CD4-positive, alpha-beta memory T cell (primary cell): ENCODE measurements at regions of chr22 and their contacts with region 1.

Region 1: GRCh38 chr22:25447686-25448434 is 116.6 kb upstream of the GRK3 start:
- DNase-seq: peak; percentile 84 to 88 (median 87)
- H3K4me3 ChIP-seq: peak overlapping the region; percentile 71 to 74
- H3K4me3 Mint-ChIP-seq: peak overlapping the region; percentile 93 to 99 (median 96)
- H3K27ac ChIP-seq: peak overlapping the region; percentile 67
- H3K27ac Mint-ChIP-seq: peak overlapping the region; percentile 77 to 98 (median 95)
- H3K4me1 ChIP-seq: peaks cover 39% of the 10 kb centered on the region
- H3K4me1 Mint-ChIP-seq: peaks cover 34 to 53% (median 42%) of the 10 kb centered on the region in 4 donors
- H3K27me3 ChIP-seq: no peaks in the 10 kb centered on the region
- H3K27me3 Mint-ChIP-seq: no peaks in the 10 kb centered on the region

Region 2: DNA sequence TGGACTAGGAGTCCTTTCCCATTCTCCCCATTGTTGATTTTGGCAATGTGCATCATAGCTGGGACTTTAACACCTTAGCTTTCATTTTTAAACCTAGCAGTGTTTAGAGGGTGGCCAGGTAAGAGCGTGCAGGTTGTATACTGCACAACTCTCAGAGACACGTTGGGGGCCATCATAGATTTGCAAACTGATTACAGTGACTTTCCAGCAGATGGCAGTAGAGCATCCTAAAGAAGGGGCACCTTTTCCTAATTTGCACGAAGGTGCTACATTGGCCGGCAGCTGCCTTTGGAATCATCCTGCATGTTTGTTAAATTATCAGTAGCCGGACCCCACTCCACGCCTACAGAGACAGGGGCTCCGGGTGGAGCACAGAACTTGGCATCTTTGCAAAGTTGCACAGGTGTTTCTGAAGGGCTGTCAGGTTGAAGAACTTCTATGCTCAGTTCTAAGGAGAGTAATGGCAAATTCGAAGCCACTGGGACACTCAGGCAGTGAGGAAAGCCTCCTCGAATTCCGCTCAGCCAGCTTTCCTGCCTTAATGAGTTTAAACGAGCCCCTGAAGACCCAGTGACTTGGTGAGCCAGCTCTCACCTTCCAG is 509.0 kb before region 1 on chr22:
- CTCF ChIA-PET with region 1: no interaction called
- POLR2A ChIA-PET with region 1: no interaction called
- intact Hi-C with region 1: no loop called
- DNase-seq: peak in 4 of 5 donors; percentile 38 to 47 (median 42)
- H3K4me3 ChIP-seq: no peak overlapping the region
- H3K4me3 Mint-ChIP-seq: no peak overlapping the region
- H3K27ac ChIP-seq: no peak overlapping the region
- H3K27ac Mint-ChIP-seq: no peak overlapping the region
- H3K4me1 ChIP-seq: no peaks in the 10 kb centered on the region
- H3K4me1 Mint-ChIP-seq: peaks cover 0 to 2% (median 0%) of the 10 kb centered on the region in 4 donors
- H3K27me3 ChIP-seq: no peaks in the 10 kb centered on the region
- H3K27me3 Mint-ChIP-seq: peaks cover 0 to 5% of the 10 kb centered on the region in 2 donors

Region 3: GRCh38 chr22:25067851-25068421 is 379.9 kb before region 1 on chr22:
- CTCF ChIA-PET with region 1: no interaction called
- POLR2A ChIA-PET with region 1: no interaction called
- intact Hi-C with region 1: loop called (anchors 10 kb)
- DNase-seq: peak; percentile 91 to 95 (median 93)
- H3K4me3 ChIP-seq: no peak overlapping the region
- H3K4me3 Mint-ChIP-seq: peak overlapping the region; percentile 84 to 95 (median 90)
- H3K27ac ChIP-seq: peak overlapping the region; percentile 77
- H3K27ac Mint-ChIP-seq: peak overlapping the region; percentile 95 to 99 (median 97)
- H3K4me1 ChIP-seq: peaks cover 83% of the 10 kb centered on the region
- H3K4me1 Mint-ChIP-seq: peaks cover 57 to 91% (median 77%) of the 10 kb centered on the region in 4 donors
- H3K27me3 ChIP-seq: no peaks in the 10 kb centered on the region
- H3K27me3 Mint-ChIP-seq: no peaks in the 10 kb centered on the region

Region 4: DNA sequence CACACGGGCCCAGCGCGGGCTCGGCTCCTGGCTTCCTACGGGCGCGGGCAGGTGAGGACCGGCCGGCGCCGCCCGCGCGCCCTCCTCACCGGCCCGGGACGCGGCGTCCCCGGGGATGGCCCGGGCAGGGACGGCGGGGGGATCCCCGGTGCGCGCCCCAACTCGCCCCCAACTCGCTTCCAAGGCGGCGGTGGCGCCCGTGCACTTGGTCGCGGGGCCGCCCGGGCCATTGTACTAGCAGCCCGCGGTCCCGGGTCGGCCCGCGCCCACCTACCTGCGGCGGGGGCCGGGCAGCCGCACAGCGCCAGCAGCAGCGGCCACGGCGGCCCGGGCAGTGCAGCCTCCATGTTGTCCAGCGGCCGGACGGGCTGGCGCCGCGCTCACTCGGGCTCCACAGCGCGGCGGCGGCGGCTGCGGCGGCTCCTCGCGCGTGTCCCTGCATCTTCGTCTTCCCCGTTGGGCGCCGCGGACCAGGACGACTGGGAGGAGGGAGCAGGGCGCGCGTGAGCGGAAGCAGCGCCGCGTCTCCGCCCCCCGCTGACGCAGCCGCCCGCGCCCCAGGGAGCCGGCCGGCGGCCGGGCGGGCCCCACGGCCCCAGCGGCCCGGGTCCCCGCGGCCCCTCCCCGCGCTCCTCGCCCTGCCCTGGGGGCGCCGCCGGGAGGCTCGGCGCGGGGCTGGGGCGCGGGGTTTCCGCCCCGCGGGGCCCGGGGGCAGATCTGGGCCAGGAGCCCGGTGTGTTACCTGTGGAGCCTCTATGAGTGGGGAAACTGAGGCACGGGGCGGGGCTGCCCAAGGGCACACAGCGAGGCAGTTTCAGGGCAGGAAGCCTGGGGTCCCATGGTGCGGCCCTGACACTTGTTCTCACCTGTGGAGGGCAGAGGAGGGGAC is 42.7 kb before region 1 on chr22:
- CTCF ChIA-PET with region 1: no interaction called
- POLR2A ChIA-PET with region 1: no interaction called
- intact Hi-C with region 1: loop called (anchors 1 kb)
- DNase-seq: peak; percentile 54 to 64 (median 64)
- H3K4me3 ChIP-seq: peak overlapping the region in 1 of 2 donors; percentile 41
- H3K4me3 Mint-ChIP-seq: peak overlapping the region; percentile 76 to 87 (median 79)
- H3K27ac ChIP-seq: peak overlapping the region; percentile 55
- H3K27ac Mint-ChIP-seq: peak overlapping the region in 5 of 7 donors; percentile 53 to 83 (median 73)
- H3K4me1 ChIP-seq: peaks cover 31% of the 10 kb centered on the region
- H3K4me1 Mint-ChIP-seq: peaks cover 16 to 46% (median 29%) of the 10 kb centered on the region in 4 donors
- H3K27me3 ChIP-seq: no peaks in the 10 kb centered on the region
- H3K27me3 Mint-ChIP-seq: no peaks in the 10 kb centered on the region

Region 5: GRCh38 chr22:25465949-25466348 is 18.1 kb after region 1 on chr22:
- CTCF ChIA-PET with region 1: interaction called, 15 read pairs
- POLR2A ChIA-PET with region 1: interaction called, 3 read pairs
- intact Hi-C with region 1: no loop called
- DNase-seq: no peak
- H3K4me3 ChIP-seq: no peak overlapping the region
- H3K4me3 Mint-ChIP-seq: no peak overlapping the region
- H3K27ac ChIP-seq: no peak overlapping the region
- H3K27ac Mint-ChIP-seq: peak overlapping the region in 1 of 7 donors; percentile 63
- H3K4me1 ChIP-seq: no peaks in the 10 kb centered on the region
- H3K4me1 Mint-ChIP-seq: peaks cover 0 to 7% (median 5%) of the 10 kb centered on the region in 4 donors
- H3K27me3 ChIP-seq: no peaks in the 10 kb centered on the region
- H3K27me3 Mint-ChIP-seq: no peaks in the 10 kb centered on the region

Region 6: GRCh38 chr22:25702040-25702439 is 254.2 kb after region 1 on chr22:
- CTCF ChIA-PET with region 1: interaction called, 3 read pairs
- POLR2A ChIA-PET with region 1: no interaction called
- intact Hi-C with region 1: loop called (anchors 5 kb)
- DNase-seq: no peak
- H3K4me3 ChIP-seq: no peak overlapping the region
- H3K4me3 Mint-ChIP-seq: no peak overlapping the region
- H3K27ac ChIP-seq: no peak overlapping the region
- H3K27ac Mint-ChIP-seq: peak overlapping the region in 1 of 7 donors; percentile 37
- H3K4me1 ChIP-seq: no peaks in the 10 kb centered on the region
- H3K4me1 Mint-ChIP-seq: peaks cover 0 to 7% (median 3%) of the 10 kb centered on the region in 4 donors
- H3K27me3 ChIP-seq: no peaks in the 10 kb centered on the region
- H3K27me3 Mint-ChIP-seq: no peaks in the 10 kb centered on the region

Region 7: GRCh38 chr22:25777870-25778269 is 330.0 kb after region 1 on chr22:
- CTCF ChIA-PET with region 1: interaction called, 5 read pairs
- POLR2A ChIA-PET with region 1: no interaction called
- intact Hi-C with region 1: loop called (anchors 1 kb)
- DNase-seq: no peak
- H3K4me3 ChIP-seq: no peak overlapping the region
- H3K4me3 Mint-ChIP-seq: no peak overlapping the region
- H3K27ac ChIP-seq: no peak overlapping the region
- H3K27ac Mint-ChIP-seq: no peak overlapping the region
- H3K4me1 ChIP-seq: peaks cover 2% of the 10 kb centered on the region
- H3K4me1 Mint-ChIP-seq: peaks cover 2 to 3% (median 2%) of the 10 kb centered on the region in 4 donors
- H3K27me3 ChIP-seq: no peaks in the 10 kb centered on the region
- H3K27me3 Mint-ChIP-seq: peaks cover 0 to 5% of the 10 kb centered on the region in 2 donors